ENCODE measurements at regions of chr14 and their contacts with region 1.

Region 1: DNA sequence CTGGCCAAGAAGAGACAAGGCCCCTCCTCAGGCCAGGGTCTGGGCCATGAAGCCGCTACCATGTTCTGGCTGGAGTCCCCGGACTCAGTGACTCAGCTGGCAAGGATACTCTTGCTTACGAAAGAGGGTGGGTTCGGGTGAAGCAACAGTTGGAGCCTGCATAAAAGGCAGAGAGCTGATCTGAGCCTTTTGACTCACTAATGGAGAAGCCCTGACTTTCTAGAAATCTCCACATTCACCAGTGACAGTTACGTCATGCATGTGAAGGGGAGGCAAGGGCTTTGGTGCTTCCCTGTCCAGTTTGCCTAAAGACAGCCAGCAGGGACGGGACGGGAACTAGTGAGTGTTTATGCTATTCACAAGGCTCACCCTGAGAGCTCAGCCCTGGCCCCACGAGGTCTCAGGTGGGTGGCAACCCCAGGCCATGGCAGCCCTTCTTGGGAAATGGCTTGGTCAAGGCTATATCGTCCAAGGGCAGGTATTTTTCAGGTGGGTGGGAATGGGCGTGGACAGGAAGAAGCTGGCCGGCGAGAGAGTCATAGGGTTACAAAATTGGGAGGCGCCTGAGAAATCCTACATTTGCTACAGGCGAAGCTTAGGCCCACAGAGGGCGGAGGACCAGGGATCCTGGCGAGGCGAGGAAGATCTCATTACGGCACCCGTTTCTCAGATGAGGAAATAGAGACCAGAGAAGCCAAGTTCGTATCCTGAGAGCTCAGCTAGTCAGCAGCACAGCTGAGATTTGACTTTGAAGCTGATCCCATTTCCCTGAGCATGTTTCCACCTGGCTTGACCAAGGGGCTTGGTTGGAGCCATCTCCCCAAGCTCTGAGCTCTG is 314.6 kb downstream of the BCL11B start:
- DNase-seq: peak; percentile 99
- H3K4me3 Mint-ChIP-seq: peak overlapping the region; percentile 70
- H3K27ac Mint-ChIP-seq: peak overlapping the region; percentile 82
- H3K4me1 Mint-ChIP-seq: peaks cover 51% of the 10 kb centered on the region
- H3K27me3 Mint-ChIP-seq: peaks cover 15% of the 10 kb centered on the region
- CTCF ChIP-seq: no peak

Region 2: GRCh38 chr14:98138666-98139065 is 818.8 kb before region 1 on chr14:
- CTCF ChIA-PET with region 1: no interaction called
- POLR2A ChIA-PET with region 1: interaction called, 3 read pairs
- intact Hi-C with region 1: loop called (anchors 10 kb)
- DNase-seq: peak; percentile 45
- H3K4me3 Mint-ChIP-seq: no peak overlapping the region
- H3K27ac Mint-ChIP-seq: no peak overlapping the region
- H3K4me1 Mint-ChIP-seq: peaks cover 12% of the 10 kb centered on the region
- H3K27me3 Mint-ChIP-seq: no peaks in the 10 kb centered on the region
- CTCF ChIP-seq: peak; percentile 46

Region 3: DNA sequence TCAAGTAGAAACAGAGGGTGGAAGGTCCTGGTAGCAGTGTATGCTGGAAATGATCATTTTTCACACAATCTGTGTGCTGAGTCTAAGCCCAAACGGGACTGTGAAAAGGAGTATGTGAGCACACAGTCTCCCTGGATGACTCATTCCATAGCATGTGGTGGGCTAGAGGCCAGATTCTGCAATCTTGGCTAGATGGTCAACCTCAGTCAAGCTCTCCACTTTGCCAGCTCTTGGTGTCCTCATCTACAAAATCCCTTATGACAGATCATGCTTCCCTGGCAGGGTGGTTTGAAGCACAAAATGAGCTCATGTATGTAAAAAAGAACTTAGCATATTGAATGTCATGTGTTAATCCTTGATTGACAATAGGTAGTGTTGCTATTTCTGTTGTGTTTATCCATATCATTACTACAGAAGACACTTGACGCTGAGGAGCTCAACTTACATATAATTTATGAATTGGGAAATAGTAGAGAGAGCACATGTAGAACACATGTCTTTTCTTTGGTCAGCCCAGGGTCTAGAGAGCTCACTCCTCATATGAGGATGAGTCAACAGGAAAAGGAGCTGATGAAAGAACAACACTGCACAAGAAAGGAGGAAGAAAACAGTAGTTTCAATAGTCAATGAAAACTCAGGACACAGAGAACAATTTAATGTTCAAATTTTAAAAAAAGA is 202.9 kb before region 1 on chr14:
- CTCF ChIA-PET with region 1: interaction called, 3 read pairs
- POLR2A ChIA-PET with region 1: interaction called, 5 read pairs
- intact Hi-C with region 1: loop called (anchors 2 kb)
- DNase-seq: peak; percentile 85
- H3K4me3 Mint-ChIP-seq: no peak overlapping the region
- H3K27ac Mint-ChIP-seq: peak overlapping the region; percentile 88
- H3K4me1 Mint-ChIP-seq: peaks cover 15% of the 10 kb centered on the region
- H3K27me3 Mint-ChIP-seq: no peaks in the 10 kb centered on the region
- CTCF ChIP-seq: no peak

Region 4: DNA sequence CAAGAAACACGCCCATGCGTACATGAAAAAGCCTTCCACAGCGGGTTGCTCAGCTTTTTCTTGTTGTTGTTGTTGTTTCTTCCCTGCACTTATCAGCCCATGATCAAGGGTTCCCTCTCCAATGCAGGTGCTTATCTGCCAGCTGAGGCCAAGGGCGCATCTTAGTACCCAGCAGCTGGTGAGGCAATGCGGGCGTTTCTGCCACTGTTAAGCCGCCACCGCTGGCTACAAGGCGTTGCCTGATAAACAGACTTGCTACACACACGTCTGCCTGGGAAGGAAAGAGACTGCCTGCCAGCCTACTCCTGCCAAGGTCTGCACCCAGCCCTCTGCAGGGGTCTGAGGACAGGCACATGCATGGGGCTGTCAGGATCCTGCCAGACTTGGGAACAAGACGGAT is 31.3 kb before region 1 on chr14:
- CTCF ChIA-PET with region 1: no interaction called
- POLR2A ChIA-PET with region 1: interaction called, 6 read pairs
- intact Hi-C with region 1: loop called (anchors 2 kb)
- DNase-seq: peak; percentile 52
- H3K4me3 Mint-ChIP-seq: no peak overlapping the region
- H3K27ac Mint-ChIP-seq: no peak overlapping the region
- H3K4me1 Mint-ChIP-seq: peaks cover 6% of the 10 kb centered on the region
- H3K27me3 Mint-ChIP-seq: no peaks in the 10 kb centered on the region
- CTCF ChIP-seq: no peak

Region 5: DNA sequence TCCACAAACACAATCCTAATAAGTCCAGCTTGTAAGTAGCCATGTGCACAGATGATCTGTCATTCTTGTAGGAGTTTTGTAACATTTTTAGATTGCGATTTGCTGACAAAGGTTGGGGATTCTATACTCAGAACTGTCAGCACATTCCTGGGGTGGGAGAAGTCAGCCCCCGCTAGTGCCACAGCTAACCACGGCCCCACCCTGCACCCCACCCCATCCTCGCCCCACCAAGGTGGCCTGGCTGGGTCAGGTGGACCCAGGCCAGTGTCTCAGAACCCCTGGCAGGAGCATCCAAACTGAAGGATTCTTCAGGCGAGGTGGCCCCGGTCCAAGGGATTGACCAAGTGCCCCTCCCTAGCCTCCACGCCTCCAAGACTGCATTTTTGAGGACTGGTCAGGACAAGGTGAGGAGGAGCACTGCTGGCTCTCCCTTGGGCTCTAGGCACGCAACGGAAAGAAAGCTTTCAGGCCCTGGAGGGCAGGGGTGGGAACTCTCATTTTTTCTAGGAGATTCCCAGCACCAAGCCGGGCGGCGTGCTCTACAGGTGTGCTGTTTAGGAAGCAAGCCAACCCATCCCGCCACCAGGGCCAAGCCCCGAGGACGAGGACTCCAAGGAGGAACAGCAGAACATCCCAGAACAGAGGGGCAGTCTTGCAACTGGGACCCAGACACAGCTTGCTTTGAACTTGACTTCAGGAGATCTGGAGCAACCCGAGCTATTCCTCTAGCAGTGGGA is 141.8 kb after region 1 on chr14:
- CTCF ChIA-PET with region 1: no interaction called
- POLR2A ChIA-PET with region 1: interaction called, 18 read pairs
- intact Hi-C with region 1: no loop called
- DNase-seq: peak; percentile 82
- H3K4me3 Mint-ChIP-seq: peak overlapping the region; percentile 9
- H3K27ac Mint-ChIP-seq: peak overlapping the region; percentile 65
- H3K4me1 Mint-ChIP-seq: peaks cover 19% of the 10 kb centered on the region
- H3K27me3 Mint-ChIP-seq: no peaks in the 10 kb centered on the region
- CTCF ChIP-seq: no peak

Region 6: GRCh38 chr14:99192028-99192621 is 234.7 kb after region 1 on chr14:
- CTCF ChIA-PET with region 1: no interaction called
- POLR2A ChIA-PET with region 1: no interaction called
- intact Hi-C with region 1: loop called (anchors 1 kb)
- DNase-seq: peak; percentile 85
- H3K4me3 Mint-ChIP-seq: peak overlapping the region; percentile 72
- H3K27ac Mint-ChIP-seq: peak overlapping the region; percentile 57
- H3K4me1 Mint-ChIP-seq: peaks cover 13% of the 10 kb centered on the region
- H3K27me3 Mint-ChIP-seq: no peaks in the 10 kb centered on the region
- CTCF ChIP-seq: no peak

Measured in MCF 10A (cell line).